Activated CD4-positive, alpha-beta T cell treated with anti-CD3 and anti-CD28 coated beads, Interleukin-2, amount 10 ng/mL, durations not matched to agents 24 days and 14 days (primary cell): ENCODE measurements at regions of chr12 and their contacts with region 1.

Region 1: GRCh38 chr12:89352492-89353187 is at the start of gene DUSP6:
- DNase-seq: peak; percentile 98
- H3K4me3 Mint-ChIP-seq: peak within 1 kb of the TSS; percentile 98
- H3K27ac Mint-ChIP-seq: peak within 1 kb of the TSS; percentile 93
- H3K4me1 Mint-ChIP-seq: peaks cover 44% of the 10 kb centered on the region
- H3K27me3 Mint-ChIP-seq: no peaks in the 10 kb centered on the region
- total RNA-seq, gene DUSP6: 95.5 and 96.7 TPM in 2 replicates

Region 2: GRCh38 chr12:89040146-89040964 is 312.3 kb before region 1 on chr12:
- intact Hi-C with region 1: loop called (anchors 1 kb)
- DNase-seq: peak; percentile 94
- H3K4me3 Mint-ChIP-seq: peak overlapping the region; percentile 72
- H3K27ac Mint-ChIP-seq: peak overlapping the region; percentile 93
- H3K4me1 Mint-ChIP-seq: peaks cover 58% of the 10 kb centered on the region
- H3K27me3 Mint-ChIP-seq: no peaks in the 10 kb centered on the region

Region 3: DNA sequence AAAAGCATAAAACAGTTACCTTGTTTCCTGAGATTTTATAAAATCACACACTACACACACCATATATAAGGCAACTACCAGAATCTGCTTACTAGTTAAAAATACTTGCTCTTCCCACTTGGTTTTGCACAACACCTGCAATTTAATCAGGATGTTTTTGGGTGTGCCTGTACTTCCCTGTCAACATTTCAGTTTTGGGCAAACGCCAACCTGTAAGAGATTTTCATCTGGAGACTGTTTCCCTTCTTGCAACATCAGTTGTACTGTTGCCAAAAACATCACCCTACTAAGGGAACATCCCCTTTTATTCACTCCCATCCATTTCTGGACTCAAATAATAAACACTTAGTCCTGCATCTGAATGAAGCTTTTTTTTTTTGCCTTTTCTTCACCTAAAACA is 172.7 kb before region 1 on chr12:
- intact Hi-C with region 1: loop called (anchors 1 kb)
- DNase-seq: no peak
- H3K4me3 Mint-ChIP-seq: peak overlapping the region; percentile 38
- H3K27ac Mint-ChIP-seq: peak overlapping the region; percentile 81
- H3K4me1 Mint-ChIP-seq: peaks cover 51% of the 10 kb centered on the region
- H3K27me3 Mint-ChIP-seq: no peaks in the 10 kb centered on the region

Region 4: DNA sequence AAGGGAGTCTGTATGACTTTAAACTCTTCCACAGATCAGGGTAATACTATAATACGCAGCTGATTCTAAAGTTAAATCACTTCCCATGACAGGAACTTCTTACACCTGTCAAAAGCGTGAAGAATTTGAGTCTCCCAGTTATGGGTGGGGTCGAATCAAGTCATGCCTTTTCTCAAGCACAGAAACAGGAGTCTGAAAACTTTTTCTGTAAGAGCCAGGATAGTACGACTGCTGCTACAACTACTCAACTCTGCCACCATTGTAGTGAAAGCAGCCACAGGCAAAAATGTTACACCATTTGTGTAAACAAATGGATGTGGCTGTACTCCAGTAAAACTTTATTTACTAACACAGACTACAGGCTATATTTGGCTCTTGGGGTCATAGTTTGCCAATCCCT is 90.7 kb before region 1 on chr12:
- intact Hi-C with region 1: loop called (anchors 1 kb)
- DNase-seq: no peak
- H3K4me3 Mint-ChIP-seq: no peak overlapping the region
- H3K27ac Mint-ChIP-seq: no peak overlapping the region
- H3K4me1 Mint-ChIP-seq: peaks cover 25% of the 10 kb centered on the region
- H3K27me3 Mint-ChIP-seq: no peaks in the 10 kb centered on the region

Region 5: GRCh38 chr12:89461649-89462612 is 109.3 kb after region 1 on chr12:
- intact Hi-C with region 1: loop called (anchors 2 kb)
- DNase-seq: peak; percentile 65
- H3K4me3 Mint-ChIP-seq: peak overlapping the region; percentile 77
- H3K27ac Mint-ChIP-seq: peak overlapping the region; percentile 64
- H3K4me1 Mint-ChIP-seq: peaks cover 39% of the 10 kb centered on the region
- H3K27me3 Mint-ChIP-seq: no peaks in the 10 kb centered on the region

Region 6: GRCh38 chr12:89524541-89525285 is 172.1 kb after region 1 on chr12 and contains the start of gene GALNT4:
- intact Hi-C with region 1: loop called (anchors 1 kb)
- DNase-seq: peak; percentile 94
- H3K4me3 Mint-ChIP-seq: peak within 1 kb of the TSS; percentile 98
- H3K27ac Mint-ChIP-seq: peak within 1 kb of the TSS; percentile 99
- H3K4me1 Mint-ChIP-seq: peaks cover 49% of the 10 kb centered on the region
- H3K27me3 Mint-ChIP-seq: no peaks in the 10 kb centered on the region
- total RNA-seq, gene GALNT4: 6.9 and 7.6 TPM in 2 replicates

Region 7: GRCh38 chr12:89862511-89863179 is 510.0 kb after region 1 on chr12:
- intact Hi-C with region 1: loop called (anchors 5 kb)
- DNase-seq: peak; percentile 86
- H3K4me3 Mint-ChIP-seq: peak overlapping the region; percentile 84
- H3K27ac Mint-ChIP-seq: peak overlapping the region; percentile 97
- H3K4me1 Mint-ChIP-seq: peaks cover 42% of the 10 kb centered on the region
- H3K27me3 Mint-ChIP-seq: no peaks in the 10 kb centered on the region